Right ventricle myocardium inferior (tissue), 1 donor: ENCODE measurements at regions of chr20 and their contacts with region 1.

Region 1: GRCh38 chr20:13105864-13106457 is 97.2 kb downstream of the SPTLC3 start:
- DNase-seq: no peak
- ATAC-seq: no peak

Region 2: GRCh38 chr20:11676630-11677284 is 1429.2 kb before region 1 on chr20:
- intact Hi-C with region 1: loop called (anchors 10 kb)
- DNase-seq: no peak
- ATAC-seq: peak; percentile 92

Region 3: GRCh38 chr20:12925214-12925755 is 180.7 kb before region 1 on chr20:
- intact Hi-C with region 1: loop called (anchors 2 kb)
- DNase-seq: no peak
- ATAC-seq: peak; percentile 86

Region 4: GRCh38 chr20:12970372-12970821 is 135.6 kb before region 1 on chr20:
- intact Hi-C with region 1: loop called (anchors 1 kb)
- DNase-seq: no peak
- ATAC-seq: no peak

Region 5: GRCh38 chr20:13009682-13010406 is 96.1 kb before region 1 on chr20:
- intact Hi-C with region 1: loop called (anchors 10 kb)
- DNase-seq: no peak
- ATAC-seq: peak; percentile 87